ENCODE measurements at regions of chr2 and their contacts with region 1.

Region 1: GRCh38 chr2:98412751-98413458 is 31.8 kb upstream of the INPP4A start:
- DNase-seq: no peak
- H3K4me3 ChIP-seq: no peak overlapping the region
- H3K27ac ChIP-seq: no peak overlapping the region
- H3K4me1 ChIP-seq: peaks cover 8% of the 10 kb centered on the region
- H3K27me3 ChIP-seq: no peaks in the 10 kb centered on the region
- CTCF ChIP-seq: peak; percentile 82

Region 2: DNA sequence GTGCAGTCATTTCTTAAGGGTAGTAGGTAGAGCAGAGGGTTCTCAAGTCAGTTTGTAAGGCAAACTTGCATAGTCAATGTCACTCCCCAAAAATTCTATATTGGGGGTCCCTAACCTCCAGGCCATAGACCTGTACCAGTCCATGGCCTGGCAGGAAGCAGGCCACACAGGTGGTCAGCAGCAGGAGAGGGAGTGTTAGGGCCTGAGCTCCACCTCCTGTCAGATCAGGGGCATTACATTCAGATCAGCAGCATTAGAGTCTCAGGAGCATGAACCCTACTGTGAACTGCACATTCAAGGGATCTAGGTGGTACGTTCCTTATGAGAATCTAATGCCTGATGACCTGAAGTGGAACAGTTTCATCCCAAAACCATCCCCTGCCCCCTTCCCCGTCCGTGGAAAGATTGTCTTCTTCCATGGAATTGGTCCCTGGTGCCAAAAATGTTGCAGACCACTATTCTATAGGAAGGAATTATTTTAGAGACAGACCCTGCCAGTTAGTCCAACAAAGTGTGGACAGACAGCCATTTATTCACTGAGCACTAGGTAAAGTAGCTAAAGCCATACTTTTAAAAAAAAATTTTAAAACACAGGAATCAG is 188.7 kb after region 1 on chr2:
- intact Hi-C with region 1: loop called (anchors 5 kb)
- DNase-seq: no peak
- H3K4me3 ChIP-seq: no peak overlapping the region
- H3K27ac ChIP-seq: no peak overlapping the region
- H3K4me1 ChIP-seq: peaks cover 35% of the 10 kb centered on the region
- H3K27me3 ChIP-seq: no peaks in the 10 kb centered on the region
- CTCF ChIP-seq: peak; percentile 71

Measured in left ventricle myocardium inferior (tissue), 1 donor.